AG04450 (cell line): ENCODE measurements at regions of chr2 and their contacts with region 1.

Region 1: GRCh38 chr2:43934567-43934966 is 61.2 kb downstream of the LRPPRC start:
- DNase-seq: no peak
- H3K4me3 ChIP-seq: no peak overlapping the region
- H3K27ac ChIP-seq: no peak overlapping the region
- H3K27me3 ChIP-seq: no peaks in the 10 kb centered on the region
- CTCF ChIP-seq: no peak

Region 2: DNA sequence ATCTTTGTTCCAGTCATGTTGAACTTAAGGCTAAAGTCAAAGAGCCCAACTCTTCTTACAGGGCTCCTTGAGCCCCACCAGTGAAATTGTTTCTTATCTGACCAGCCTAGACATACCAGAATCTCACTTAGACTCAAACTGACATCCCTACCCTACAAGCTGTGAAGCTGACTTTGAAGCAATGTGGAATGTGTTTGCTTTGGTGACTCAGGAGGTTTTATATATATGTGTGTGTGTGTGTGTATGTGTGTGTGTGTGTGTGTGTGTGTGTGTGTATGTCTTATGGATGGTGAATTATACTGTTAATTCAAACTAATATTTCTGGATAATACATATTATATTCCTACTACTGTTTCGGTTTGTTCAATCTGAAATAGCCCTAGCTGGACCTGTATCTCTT is 494.5 kb after region 1 on chr2:
- CTCF ChIA-PET with region 1: interaction called, 10 read pairs
- POLR2A ChIA-PET with region 1: no interaction called
- DNase-seq: peak; percentile 3
- H3K4me3 ChIP-seq: no peak overlapping the region
- H3K27ac ChIP-seq: no peak overlapping the region
- H3K27me3 ChIP-seq: no peaks in the 10 kb centered on the region
- CTCF ChIP-seq: no peak